ENCODE measurements at regions of chr10 and their contacts with region 1.

Region 1: DNA sequence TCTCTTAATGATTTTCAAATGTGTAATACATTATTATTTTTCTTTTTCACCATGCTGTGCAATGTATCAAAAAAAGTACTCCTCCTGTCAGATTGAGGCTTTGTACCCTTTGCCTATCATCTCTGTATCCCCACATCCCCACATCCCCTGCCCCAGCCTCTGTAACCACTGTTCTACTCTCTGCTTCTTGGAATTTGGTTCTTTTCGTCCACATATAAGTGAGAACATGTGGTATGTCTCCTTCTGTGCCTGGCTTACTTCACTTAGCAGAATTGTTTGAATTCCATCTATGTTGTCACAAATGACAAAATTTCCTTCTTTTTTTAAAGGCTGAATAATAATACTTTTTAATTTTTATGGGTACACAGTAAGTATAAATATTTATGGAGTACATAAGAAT is 13.8 kb downstream of the TAF3 start:
- DNase-seq: no peak
- ATAC-seq: no peak
- H3K4me3 ChIP-seq: no peak overlapping the region
- H3K27ac ChIP-seq: no peak overlapping the region
- H3K4me1 ChIP-seq: peaks cover 0 to 15% (median 2%) of the 10 kb centered on the region in 12 donors
- H3K27me3 ChIP-seq: no peaks in the 10 kb centered on the region
- CTCF ChIP-seq: no peak
- POLR2A ChIP-seq: no peak

Region 2: DNA sequence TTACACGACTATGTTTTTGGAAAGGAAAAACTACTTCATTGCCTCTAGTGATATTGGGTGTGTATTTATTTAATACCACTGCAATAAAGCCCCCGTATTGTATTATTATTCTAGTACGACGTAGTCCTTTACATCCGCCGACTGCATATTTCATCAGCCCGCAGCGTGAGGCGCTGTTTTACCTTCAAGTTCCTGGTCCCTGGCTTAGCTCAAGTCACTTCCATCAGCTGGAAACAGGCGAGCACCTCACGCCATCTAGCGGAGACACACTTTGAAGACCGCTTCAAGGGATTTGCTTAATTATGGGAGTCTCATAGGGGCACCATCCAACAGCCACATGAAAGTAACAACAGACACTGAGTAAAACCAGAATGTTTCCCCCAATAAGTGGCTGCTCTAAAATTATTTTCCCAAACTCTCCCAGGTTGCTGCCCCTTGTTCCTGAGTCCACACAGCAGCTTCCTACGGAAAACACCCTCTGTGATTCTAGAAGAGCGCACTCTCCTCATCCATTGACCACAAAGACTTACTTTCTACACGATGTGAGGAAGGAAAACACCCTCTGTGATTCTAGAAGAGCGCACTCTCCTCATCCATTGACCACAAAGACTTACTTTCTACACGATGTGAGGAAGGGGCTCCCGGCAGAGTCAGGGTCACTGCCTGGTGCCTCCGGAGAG is 144.7 kb before region 1 on chr10:
- intact Hi-C with region 1: no loop called
- DNase-seq: peak; percentile 80 to 87 (median 81)
- ATAC-seq: peak; percentile 77 to 95 (median 94)
- H3K4me3 ChIP-seq: no peak overlapping the region
- H3K27ac ChIP-seq: no peak overlapping the region
- H3K4me1 ChIP-seq: peaks cover 0 to 2% (median 0%) of the 10 kb centered on the region in 12 donors
- H3K27me3 ChIP-seq: peaks cover 0 to 7% (median 0%) of the 10 kb centered on the region in 9 donors
- CTCF ChIP-seq: peak; percentile 72 to 95 (median 88)
- POLR2A ChIP-seq: no peak

Region 3: GRCh38 chr10:7866176-7866575 is 34.1 kb after region 1 on chr10:
- intact Hi-C with region 1: no loop called
- DNase-seq: no peak
- ATAC-seq: no peak
- H3K4me3 ChIP-seq: no peak overlapping the region
- H3K27ac ChIP-seq: no peak overlapping the region
- H3K4me1 ChIP-seq: no peaks in the 10 kb centered on the region
- H3K27me3 ChIP-seq: no peaks in the 10 kb centered on the region
- CTCF ChIP-seq: no peak
- POLR2A ChIP-seq: no peak

Region 4: DNA sequence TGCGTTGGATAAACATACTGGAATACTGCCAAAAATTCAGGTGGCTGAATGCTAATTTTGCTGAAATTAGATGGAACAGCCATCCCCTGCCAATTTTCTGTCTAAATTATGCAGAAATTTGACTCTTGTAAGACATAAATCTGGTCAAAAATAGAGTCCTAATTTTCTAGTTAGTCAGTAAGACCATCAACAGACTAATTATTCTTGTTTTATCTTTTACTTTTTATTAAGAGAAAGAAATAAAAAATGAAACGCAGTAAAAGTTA is 112.1 kb after region 1 on chr10:
- intact Hi-C with region 1: loop called in 1 of 10 experiments (anchors 5 kb)
- DNase-seq: no peak
- ATAC-seq: no peak
- H3K4me3 ChIP-seq: no peak overlapping the region
- H3K27ac ChIP-seq: no peak overlapping the region
- H3K4me1 ChIP-seq: peaks cover 0 to 17% (median 0%) of the 10 kb centered on the region in 12 donors
- H3K27me3 ChIP-seq: no peaks in the 10 kb centered on the region
- CTCF ChIP-seq: no peak
- POLR2A ChIP-seq: no peak